Colonic mucosa (tissue), 4 donors: ENCODE measurements at regions of chr22 and their contacts with region 1.

Region 1: DNA sequence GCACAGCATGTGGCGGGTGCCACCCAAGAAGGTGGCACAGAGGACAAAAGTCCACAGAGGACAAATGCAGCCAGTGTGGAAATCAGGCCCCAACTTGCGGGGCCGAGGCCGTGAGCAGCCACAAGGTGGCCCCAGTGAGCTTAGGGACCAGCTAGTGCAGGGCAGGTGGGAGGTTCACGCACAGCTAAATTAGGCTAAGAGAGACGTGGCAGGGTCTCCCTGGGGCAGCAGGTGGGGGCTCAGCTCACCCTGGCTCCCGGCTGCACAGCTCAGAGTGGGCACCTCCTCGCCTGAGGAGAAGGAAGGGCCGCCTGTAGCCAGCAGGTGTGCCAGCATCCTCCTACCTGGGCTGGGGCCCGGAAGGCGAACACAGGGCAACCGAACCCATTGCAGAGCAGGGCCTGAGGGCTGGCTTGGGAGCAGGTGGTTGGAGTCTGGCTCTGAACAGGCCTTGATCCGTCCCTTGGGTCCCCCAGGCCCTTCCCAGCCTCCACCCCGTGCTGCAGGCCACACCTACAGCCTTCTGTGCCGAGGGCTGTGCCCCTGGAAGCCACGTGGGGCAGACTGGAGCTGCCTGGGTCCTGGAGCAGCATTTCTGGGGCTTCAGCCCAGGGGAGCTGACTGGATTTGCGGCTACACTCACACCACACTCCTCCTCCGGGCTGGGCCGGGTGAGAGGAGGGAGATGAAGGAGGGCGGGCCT is 26.1 kb upstream of the CELSR1 start:
- DNase-seq: peak; percentile 92
- H3K4me3 ChIP-seq: peak overlapping the region; percentile 8
- H3K27ac ChIP-seq: peak overlapping the region; percentile 78
- H3K4me1 ChIP-seq: peaks cover 8% of the 10 kb centered on the region
- H3K27me3 ChIP-seq: no peaks in the 10 kb centered on the region
- CTCF ChIP-seq: peak; percentile 78

Region 2: DNA sequence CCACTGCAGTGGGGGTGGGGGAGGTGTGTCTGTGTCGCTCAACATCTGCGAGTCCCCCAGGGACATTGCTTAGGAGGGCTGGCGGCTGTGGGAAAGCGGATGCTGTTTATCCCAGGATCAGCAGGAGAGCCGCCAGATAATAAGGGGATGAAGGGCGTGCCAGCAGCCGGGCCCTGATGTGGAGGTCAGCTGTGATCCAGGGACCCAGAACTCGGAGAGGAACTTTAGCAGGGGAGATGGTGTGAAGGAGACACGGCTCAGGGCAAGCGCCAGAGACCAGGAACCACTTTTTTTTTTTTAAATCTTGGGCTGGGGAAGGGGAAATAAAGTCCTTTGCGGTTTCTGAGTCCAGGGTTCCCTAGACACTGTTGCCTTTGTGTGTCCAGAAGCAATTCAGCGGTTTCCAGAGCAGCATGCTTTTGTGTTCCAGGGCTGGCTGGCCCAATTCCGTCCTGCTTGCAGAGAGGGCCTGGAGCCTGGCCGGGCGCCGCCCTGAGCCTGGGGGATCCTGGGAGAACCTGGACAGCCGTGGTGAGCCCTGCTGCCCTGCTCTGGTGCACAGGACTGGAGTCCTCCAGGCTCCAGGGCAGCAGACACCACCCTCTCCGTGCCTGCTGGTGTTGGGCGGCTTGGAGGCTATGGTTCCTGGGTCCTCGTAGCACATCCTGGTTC is 56.4 kb after region 1 on chr22 and contains the start of gene GRAMD4:
- intact Hi-C with region 1: loop called (anchors 10 kb)
- DNase-seq: no peak
- H3K4me3 ChIP-seq: no peak within 1 kb of the TSS
- H3K27ac ChIP-seq: peak within 1 kb of the TSS; percentile 17
- H3K4me1 ChIP-seq: peaks cover 3% of the 10 kb centered on the region
- H3K27me3 ChIP-seq: no peaks in the 10 kb centered on the region
- CTCF ChIP-seq: no peak
- total RNA-seq, gene GRAMD4: 118 to 141 TPM

Region 3: DNA sequence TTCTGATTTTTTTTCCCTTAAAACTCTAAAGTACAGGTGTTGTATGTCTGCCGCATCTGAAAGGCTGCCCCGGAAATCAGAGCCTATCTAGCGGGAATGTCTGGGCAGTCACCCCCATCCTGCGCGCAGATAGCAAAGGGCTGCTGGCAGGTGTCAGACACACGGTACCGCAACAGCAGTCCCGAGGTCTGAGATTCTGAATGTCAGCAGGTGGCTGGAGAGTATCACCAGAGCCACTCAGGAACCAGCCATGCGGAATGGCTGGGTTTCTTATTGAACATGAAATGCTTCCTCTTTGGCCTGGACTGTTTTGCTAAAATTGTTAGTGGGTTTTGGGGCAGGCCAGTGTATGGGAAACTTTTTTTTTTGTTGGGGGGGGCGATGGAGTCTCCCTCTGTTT is 121.2 kb after region 1 on chr22:
- intact Hi-C with region 1: no loop called
- DNase-seq: no peak
- H3K4me3 ChIP-seq: no peak overlapping the region
- H3K27ac ChIP-seq: peak overlapping the region; percentile 91
- H3K4me1 ChIP-seq: peaks cover 21% of the 10 kb centered on the region
- H3K27me3 ChIP-seq: no peaks in the 10 kb centered on the region
- CTCF ChIP-seq: no peak

Region 4: DNA sequence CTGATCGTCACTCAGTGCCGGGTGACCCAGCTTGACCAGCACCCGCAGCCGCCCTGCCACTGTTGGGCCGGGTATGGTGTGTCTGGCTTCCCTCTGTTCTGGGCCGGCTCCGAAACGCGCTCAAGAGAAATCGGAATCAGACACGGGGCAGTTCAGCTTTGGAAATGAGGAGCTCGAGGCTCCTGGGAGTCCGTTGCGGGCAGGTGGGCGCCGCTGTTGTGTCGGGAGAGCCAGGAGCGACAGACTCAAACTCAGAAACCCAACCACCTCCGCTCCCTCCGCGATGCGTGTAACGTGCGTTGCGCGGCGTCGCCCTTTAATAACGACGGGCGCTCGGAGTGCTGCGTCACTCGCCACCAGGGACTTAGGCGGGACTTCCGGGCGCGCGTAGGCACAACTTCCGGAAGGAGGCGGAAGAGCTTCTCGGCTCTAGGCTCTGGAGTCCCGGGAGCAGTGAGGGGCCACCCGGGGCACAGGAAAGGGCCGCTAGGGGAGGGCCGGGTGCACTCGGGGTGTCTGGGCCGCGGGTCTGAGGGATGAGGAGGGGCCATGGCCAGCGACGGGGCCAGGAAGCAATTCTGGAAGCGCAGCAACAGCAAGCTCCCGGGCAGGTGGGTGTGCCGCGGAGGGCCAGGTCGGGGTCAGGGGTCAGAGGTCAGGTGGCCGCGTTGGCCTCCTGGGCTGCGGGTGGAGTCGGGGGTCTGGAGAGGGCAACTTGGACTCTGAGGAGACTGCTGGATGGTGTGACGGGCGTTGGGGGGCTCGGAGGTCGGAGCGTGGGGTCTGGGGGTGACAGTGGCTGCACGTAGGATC is 198.9 kb after region 1 on chr22 and contains the start of gene TBC1D22A:
- intact Hi-C with region 1: loop called (anchors 10 kb)
- DNase-seq: peak; percentile 96
- H3K4me3 ChIP-seq: peak within 1 kb of the TSS; percentile 92
- H3K27ac ChIP-seq: peak within 1 kb of the TSS; percentile 93
- H3K4me1 ChIP-seq: peaks cover 8% of the 10 kb centered on the region
- H3K27me3 ChIP-seq: no peaks in the 10 kb centered on the region
- CTCF ChIP-seq: no peak
- total RNA-seq, gene TBC1D22A: 34.2 to 36.4 TPM